Panc1 (cell line): ENCODE measurements at regions of chr4 and their contacts with region 1.

Region 1: DNA sequence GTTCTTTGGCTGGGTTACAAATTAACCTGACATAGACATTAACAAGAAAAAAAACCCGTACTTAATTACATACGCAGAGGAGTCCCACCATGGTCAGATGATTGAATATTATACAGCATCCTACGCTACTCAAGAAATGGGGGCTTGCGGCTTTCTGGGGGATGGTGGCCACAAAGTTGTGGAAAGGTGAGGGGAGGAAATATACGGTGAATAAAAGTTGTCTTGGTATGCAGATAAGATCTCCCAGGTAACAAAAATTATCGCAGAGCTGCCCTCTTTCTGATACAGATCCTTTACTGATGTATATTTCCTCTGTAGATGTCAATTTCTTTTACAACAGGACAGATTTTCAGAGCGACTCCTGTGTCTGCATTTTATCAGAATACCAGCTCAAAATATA is 890 bp downstream of the DCAF16 start:
- DNase-seq: no peak
- ATAC-seq: no peak
- H3K4me3 ChIP-seq: peak overlapping the region; percentile 83 to 89
- H3K27ac ChIP-seq: peak overlapping the region; percentile 93
- H3K4me1 ChIP-seq: peaks cover 8% of the 10 kb centered on the region
- H3K27me3 ChIP-seq: no peaks in the 10 kb centered on the region
- CTCF ChIP-seq: no peak

Region 2: DNA sequence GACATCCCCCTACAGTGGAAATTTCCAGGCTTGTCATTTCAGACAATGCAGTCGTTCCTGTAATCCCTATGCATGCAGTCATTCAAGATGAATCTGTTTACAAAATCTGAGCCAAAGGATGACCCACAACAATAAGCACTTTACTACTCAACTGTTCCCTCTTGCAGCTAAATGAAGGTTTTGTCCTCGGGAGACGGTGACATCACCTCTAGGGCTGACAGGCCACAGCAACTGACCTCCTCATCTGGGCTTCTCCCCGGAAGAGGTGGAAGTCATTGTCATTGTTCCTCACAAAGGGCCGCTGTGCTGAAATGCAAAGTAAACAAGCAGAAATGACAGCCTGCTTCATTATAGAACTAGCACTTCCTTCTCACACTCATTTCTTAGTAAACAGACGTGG is 265.5 kb before region 1 on chr4:
- CTCF ChIA-PET with region 1: interaction called, 4 read pairs
- POLR2A ChIA-PET with region 1: no interaction called
- in situ Hi-C with region 1: no loop called
- intact Hi-C with region 1: loop called (anchors 5 kb)
- DNase-seq: peak; percentile 5
- ATAC-seq: no peak
- H3K4me3 ChIP-seq: no peak overlapping the region
- H3K27ac ChIP-seq: no peak overlapping the region
- H3K4me1 ChIP-seq: no peaks in the 10 kb centered on the region
- H3K27me3 ChIP-seq: no peaks in the 10 kb centered on the region
- CTCF ChIP-seq: no peak

Region 3: GRCh38 chr4:17823871-17824669 is 14.4 kb after region 1 on chr4:
- CTCF ChIA-PET with region 1: interaction called, 10 read pairs
- POLR2A ChIA-PET with region 1: interaction called, 3 read pairs
- in situ Hi-C with region 1: no loop called
- intact Hi-C with region 1: no loop called
- DNase-seq: no peak
- ATAC-seq: no peak
- H3K4me3 ChIP-seq: no peak overlapping the region
- H3K27ac ChIP-seq: no peak overlapping the region
- H3K4me1 ChIP-seq: no peaks in the 10 kb centered on the region
- H3K27me3 ChIP-seq: no peaks in the 10 kb centered on the region
- CTCF ChIP-seq: no peak